Activated CD4-positive, alpha-beta T cell treated with anti-CD3 and anti-CD28 coated beads, Interleukin-2, amount 10 ng/mL, durations not matched to agents 24 days and 14 days (primary cell): ENCODE measurements at regions of chr6 and their contacts with region 1.

Region 1: GRCh38 chr6:34414999-34415858 is 10.6 kb downstream of the RPS10 start:
- DNase-seq: peak; percentile 83
- H3K4me3 Mint-ChIP-seq: no peak overlapping the region
- H3K27ac Mint-ChIP-seq: peak overlapping the region; percentile 34
- H3K4me1 Mint-ChIP-seq: peaks cover 15% of the 10 kb centered on the region
- H3K27me3 Mint-ChIP-seq: no peaks in the 10 kb centered on the region

Region 2: DNA sequence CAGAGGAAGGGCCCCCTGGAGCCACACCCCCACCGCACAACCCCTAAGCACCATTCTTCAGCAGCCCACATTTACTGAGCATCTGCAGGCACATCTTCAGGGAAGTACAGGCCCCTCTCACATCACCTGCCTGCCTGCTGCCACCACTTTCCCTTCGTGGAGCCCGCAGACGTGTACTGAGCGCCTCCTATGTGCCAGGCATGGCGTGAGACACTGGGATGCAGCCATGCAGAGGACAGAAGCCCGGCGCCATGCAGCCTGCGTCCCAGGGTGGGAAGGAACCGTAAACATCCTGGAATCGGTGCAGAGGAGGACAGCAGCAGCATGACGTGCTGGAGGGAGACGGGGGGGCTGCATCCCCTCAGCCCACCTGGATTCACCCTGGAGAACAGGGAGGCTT is 347.4 kb before region 1 on chr6:
- intact Hi-C with region 1: no loop called
- DNase-seq: no peak
- H3K4me3 Mint-ChIP-seq: no peak overlapping the region
- H3K27ac Mint-ChIP-seq: no peak overlapping the region
- H3K4me1 Mint-ChIP-seq: no peaks in the 10 kb centered on the region
- H3K27me3 Mint-ChIP-seq: no peaks in the 10 kb centered on the region

Region 3: GRCh38 chr6:34161857-34162515 is 253.2 kb before region 1 on chr6:
- intact Hi-C with region 1: loop called (anchors 2 kb)
- DNase-seq: no peak
- H3K4me3 Mint-ChIP-seq: no peak overlapping the region
- H3K27ac Mint-ChIP-seq: no peak overlapping the region
- H3K4me1 Mint-ChIP-seq: peaks cover 3% of the 10 kb centered on the region
- H3K27me3 Mint-ChIP-seq: peaks cover 29% of the 10 kb centered on the region

Region 4: DNA sequence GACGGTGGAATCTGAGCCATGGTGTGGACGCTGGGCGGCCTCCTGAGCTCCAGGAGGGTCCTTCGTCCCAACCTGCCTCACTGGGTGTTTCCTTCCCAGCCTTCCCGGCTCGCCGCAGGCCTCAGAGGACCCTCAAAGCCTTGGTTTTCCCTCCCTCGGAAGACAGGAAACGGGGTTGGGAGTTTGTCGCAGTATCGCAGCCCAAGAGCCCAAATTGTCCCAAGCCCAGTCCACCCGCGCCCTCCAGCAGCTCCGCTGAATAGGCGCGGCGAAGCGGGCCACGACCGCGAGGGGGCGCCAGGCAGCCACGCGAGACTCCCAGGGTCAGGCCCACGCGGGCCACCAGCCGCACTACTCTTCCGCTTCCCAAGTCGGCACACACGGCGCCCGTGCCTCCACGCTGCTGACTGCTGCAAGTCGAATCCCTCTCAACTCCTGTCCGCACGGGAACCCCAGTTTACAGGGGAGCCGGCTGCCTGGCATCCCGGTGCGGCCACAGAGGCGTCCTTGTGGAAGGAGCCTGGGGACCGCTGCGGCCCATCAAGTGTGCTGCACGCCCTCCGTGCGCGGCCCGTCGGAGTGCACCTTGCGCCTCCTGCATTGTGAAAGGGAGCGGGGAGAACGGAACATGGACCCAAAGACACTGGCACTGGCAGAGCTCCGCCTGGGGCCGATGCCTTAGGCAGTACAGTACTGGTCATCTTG is 219.0 kb before region 1 on chr6:
- intact Hi-C with region 1: loop called (anchors 1 kb)
- DNase-seq: peak; percentile 97
- H3K4me3 Mint-ChIP-seq: peak overlapping the region; percentile 80
- H3K27ac Mint-ChIP-seq: peak overlapping the region; percentile 48
- H3K4me1 Mint-ChIP-seq: peaks cover 9% of the 10 kb centered on the region
- H3K27me3 Mint-ChIP-seq: peaks cover 14% of the 10 kb centered on the region

Region 5: GRCh38 chr6:34392497-34393190 is 22.6 kb before region 1 on chr6 and contains the start of gene NUDT3:
- intact Hi-C with region 1: no loop called
- DNase-seq: peak; percentile 98
- H3K4me3 Mint-ChIP-seq: no peak within 1 kb of the TSS
- H3K27ac Mint-ChIP-seq: no peak within 1 kb of the TSS
- H3K4me1 Mint-ChIP-seq: peaks cover 9% of the 10 kb centered on the region
- H3K27me3 Mint-ChIP-seq: no peaks in the 10 kb centered on the region
- total RNA-seq, gene NUDT3: 21.2 and 21.8 TPM in 2 replicates

Region 6: GRCh38 chr6:34476447-34476846 is 61.2 kb after region 1 on chr6:
- intact Hi-C with region 1: no loop called
- DNase-seq: no peak
- H3K4me3 Mint-ChIP-seq: no peak overlapping the region
- H3K27ac Mint-ChIP-seq: no peak overlapping the region
- H3K4me1 Mint-ChIP-seq: no peaks in the 10 kb centered on the region
- H3K27me3 Mint-ChIP-seq: peaks cover 2% of the 10 kb centered on the region

Region 7: DNA sequence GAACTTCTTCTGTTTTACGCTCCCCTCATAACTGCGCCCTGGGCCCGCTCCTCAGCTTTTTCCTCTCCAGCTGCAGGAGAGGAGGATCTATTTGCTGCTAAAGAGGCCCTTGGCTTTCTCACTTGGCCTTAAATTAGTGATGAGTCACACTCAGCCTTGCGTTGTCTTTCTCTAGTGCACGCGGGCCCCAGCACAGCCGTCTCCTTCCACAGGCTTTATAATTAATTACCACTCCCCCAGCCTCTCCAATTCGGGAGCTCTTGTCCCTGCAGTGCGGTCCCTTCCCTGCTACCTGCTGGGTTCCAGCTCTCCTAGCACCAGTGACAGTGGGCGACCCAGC is 75.8 kb after region 1 on chr6:
- intact Hi-C with region 1: no loop called
- DNase-seq: no peak
- H3K4me3 Mint-ChIP-seq: no peak overlapping the region
- H3K27ac Mint-ChIP-seq: no peak overlapping the region
- H3K4me1 Mint-ChIP-seq: peaks cover 6% of the 10 kb centered on the region
- H3K27me3 Mint-ChIP-seq: no peaks in the 10 kb centered on the region